ENCODE measurements at regions of chr7 and their contacts with region 1.

Region 1: DNA sequence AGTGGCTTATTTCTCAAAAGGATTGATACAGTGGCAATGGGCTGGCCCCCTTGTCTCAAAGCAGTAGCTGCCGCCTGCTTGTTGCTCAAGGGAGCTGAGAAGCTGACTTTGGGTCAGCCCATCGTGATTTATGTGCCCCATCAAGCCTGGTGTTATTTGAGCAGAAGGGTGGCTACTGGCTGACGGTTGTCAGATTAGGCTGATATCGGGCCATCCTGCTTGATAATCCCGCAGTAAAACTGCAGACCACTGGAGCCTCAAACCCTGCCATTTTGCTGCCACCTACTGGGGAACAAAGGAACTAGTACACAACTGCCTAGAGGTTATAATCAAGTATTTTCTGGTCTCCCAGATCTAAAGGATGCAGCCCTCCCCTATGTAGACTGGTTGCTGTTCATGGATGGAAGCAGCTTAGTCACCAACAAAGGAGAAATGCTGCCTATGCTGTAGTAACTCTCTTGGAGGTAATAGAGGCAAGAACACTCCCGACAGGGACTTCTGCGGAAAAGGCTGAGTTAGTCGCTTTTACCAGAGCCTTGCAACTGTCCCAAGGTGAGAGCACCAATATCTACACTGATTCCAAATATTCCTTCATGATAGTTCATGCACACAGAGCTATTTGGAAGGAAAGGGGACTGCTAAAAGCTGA is 65.9 kb upstream of the ZNF92 start:
- DNase-seq: peak in 4 of 5 donors; percentile 19 to 35 (median 26)
- ATAC-seq: peak in 2 of 4 donors; percentile 59 to 72
- H3K4me3 ChIP-seq: no peak overlapping the region
- H3K27ac ChIP-seq: no peak overlapping the region
- H3K4me1 ChIP-seq: no peaks in the 10 kb centered on the region
- H3K27me3 ChIP-seq: peaks cover 0 to 16% (median 0%) of the 10 kb centered on the region in 9 donors
- CTCF ChIP-seq: peak; percentile 63 to 91 (median 80)
- POLR2A ChIP-seq: no peak

Region 2: DNA sequence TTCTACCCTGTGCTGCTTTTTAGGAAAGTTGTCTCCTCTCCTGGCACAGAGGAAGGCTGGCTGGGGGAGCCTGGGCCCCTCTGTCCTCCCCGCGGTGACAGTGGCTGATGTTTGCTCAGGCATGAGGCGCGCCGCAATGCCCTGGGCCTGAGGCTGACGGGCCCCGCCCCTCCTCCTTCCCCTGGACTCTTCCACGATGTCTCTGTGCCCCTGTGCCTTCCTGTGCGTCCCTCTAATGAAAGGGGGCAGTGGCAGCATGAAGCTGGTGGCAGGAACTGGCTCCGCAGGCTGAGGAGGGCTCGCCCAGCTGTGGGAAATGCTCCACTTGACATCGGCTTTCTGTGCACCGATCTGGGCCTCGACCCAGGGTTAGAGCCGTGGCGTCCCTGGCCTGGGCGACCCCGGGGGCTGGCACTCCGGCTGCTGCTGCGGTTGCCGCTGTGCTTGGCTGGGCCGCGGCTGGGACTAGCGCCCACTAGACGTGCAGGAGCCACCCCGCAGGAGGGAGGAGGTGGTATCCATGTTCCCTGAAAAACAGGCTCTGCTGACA is 812.8 kb before region 1 on chr7:
- intact Hi-C with region 1: no loop called
- DNase-seq: no peak
- ATAC-seq: peak; percentile 26 to 78 (median 62)
- H3K4me3 ChIP-seq: peak overlapping the region in 7 of 12 donors; percentile 10 to 51 (median 36)
- H3K27ac ChIP-seq: no peak overlapping the region
- H3K4me1 ChIP-seq: peaks cover 0 to 8% (median 0%) of the 10 kb centered on the region in 12 donors
- H3K27me3 ChIP-seq: no peaks in the 10 kb centered on the region
- CTCF ChIP-seq: no peak
- POLR2A ChIP-seq: no peak

Region 3: GRCh38 chr7:64951250-64951848 is 356.4 kb before region 1 on chr7:
- intact Hi-C with region 1: loop called in 9 of 10 experiments (anchors 1 to 5 kb)
- DNase-seq: no peak
- ATAC-seq: peak in 3 of 4 donors; percentile 39 to 72 (median 44)
- H3K4me3 ChIP-seq: no peak overlapping the region
- H3K27ac ChIP-seq: no peak overlapping the region
- H3K4me1 ChIP-seq: peaks cover 0 to 12% (median 8%) of the 10 kb centered on the region in 12 donors
- H3K27me3 ChIP-seq: peaks cover 8 to 26% (median 18%) of the 10 kb centered on the region in 9 donors
- CTCF ChIP-seq: peak; percentile 74 to 92 (median 86)
- POLR2A ChIP-seq: no peak

Region 4: DNA sequence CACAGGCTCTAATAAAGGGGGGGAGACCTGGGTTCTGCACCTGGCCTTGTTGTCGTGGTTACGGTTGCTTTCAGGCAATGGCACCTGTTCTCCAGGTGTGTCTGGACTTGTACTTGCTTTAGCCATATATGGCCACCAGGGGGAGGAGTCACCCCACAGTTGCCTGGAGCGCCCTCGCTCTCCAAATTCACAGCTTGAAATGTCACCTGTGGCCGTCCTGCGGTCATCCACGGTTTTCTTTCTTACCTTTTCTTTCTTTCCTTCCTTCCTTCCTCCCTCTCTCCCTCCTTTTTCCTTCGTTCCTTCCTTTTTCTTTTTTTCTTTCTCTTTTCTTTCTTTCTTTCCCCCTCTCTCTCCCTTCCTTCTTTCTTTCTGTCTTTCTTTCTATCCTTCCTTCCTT is 91.3 kb before region 1 on chr7:
- intact Hi-C with region 1: loop called in 3 of 10 experiments (anchors 2 to 10 kb)
- DNase-seq: peak in 3 of 5 donors; percentile 34 to 48 (median 37)
- ATAC-seq: no peak
- H3K4me3 ChIP-seq: no peak overlapping the region
- H3K27ac ChIP-seq: no peak overlapping the region
- H3K4me1 ChIP-seq: no peaks in the 10 kb centered on the region
- H3K27me3 ChIP-seq: no peaks in the 10 kb centered on the region
- CTCF ChIP-seq: peak; percentile 39 to 70 (median 56)
- POLR2A ChIP-seq: no peak

Region 5: GRCh38 chr7:65225422-65226006 is 82.3 kb before region 1 on chr7:
- intact Hi-C with region 1: loop called in 2 of 10 experiments (anchors 10 kb)
- DNase-seq: no peak
- ATAC-seq: no peak
- H3K4me3 ChIP-seq: no peak overlapping the region
- H3K27ac ChIP-seq: no peak overlapping the region
- H3K4me1 ChIP-seq: no peaks in the 10 kb centered on the region
- H3K27me3 ChIP-seq: no peaks in the 10 kb centered on the region
- CTCF ChIP-seq: no peak
- POLR2A ChIP-seq: no peak

Region 6: DNA sequence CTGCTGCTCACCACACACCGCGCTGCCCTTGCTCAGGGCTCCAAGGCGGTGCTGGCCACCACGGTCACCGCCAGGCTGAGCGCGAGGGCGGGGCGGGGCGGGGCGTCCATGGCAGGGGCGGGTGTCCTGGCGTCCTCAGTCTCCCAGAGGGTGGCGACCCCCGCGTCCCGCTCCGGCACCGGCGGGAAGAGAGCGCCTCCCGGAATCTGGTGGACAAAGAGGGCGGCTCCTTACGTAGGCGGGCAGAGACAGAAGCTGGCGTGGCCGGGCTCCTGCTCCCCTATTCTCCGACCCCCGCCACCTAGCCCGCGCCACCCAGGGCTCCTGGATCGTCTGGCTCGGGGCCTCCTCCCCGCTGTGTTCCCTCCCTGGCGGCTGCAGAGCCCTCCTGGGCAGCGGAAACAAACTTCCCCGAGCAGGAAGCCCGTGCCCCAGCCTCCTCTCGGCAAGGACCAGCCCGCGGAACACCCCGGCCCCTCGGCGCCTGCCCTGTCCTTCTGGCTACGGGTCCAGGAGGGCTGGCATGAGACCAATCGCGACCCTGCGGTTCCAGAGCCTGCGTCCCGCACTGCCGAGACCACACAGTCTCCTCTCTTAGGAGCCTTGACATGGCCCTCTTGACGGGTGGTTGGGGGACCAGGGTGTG is 67.9 kb before region 1 on chr7:
- intact Hi-C with region 1: loop called in 1 of 10 experiments (anchors 10 kb)
- DNase-seq: peak in 2 of 5 donors; percentile 35 to 39
- ATAC-seq: peak; percentile 37 to 92 (median 78)
- H3K4me3 ChIP-seq: peak overlapping the region; percentile 13 to 66 (median 54)
- H3K27ac ChIP-seq: no peak overlapping the region
- H3K4me1 ChIP-seq: peaks cover 0 to 10% (median 4%) of the 10 kb centered on the region in 12 donors
- H3K27me3 ChIP-seq: peaks cover 0 to 58% (median 15%) of the 10 kb centered on the region in 9 donors
- CTCF ChIP-seq: no peak
- POLR2A ChIP-seq: no peak